ENCODE measurements at regions of chr3 and their contacts with region 1.

Region 1: GRCh38 chr3:153944084-153944483 is 177.1 kb upstream of the ARHGEF26 start:
- DNase-seq: no peak
- ATAC-seq: no peak
- H3K4me3 ChIP-seq: no peak overlapping the region
- H3K27ac ChIP-seq: no peak overlapping the region
- H3K4me1 ChIP-seq: no peaks in the 10 kb centered on the region
- H3K27me3 ChIP-seq: no peaks in the 10 kb centered on the region
- CTCF ChIP-seq: no peak

Region 2: DNA sequence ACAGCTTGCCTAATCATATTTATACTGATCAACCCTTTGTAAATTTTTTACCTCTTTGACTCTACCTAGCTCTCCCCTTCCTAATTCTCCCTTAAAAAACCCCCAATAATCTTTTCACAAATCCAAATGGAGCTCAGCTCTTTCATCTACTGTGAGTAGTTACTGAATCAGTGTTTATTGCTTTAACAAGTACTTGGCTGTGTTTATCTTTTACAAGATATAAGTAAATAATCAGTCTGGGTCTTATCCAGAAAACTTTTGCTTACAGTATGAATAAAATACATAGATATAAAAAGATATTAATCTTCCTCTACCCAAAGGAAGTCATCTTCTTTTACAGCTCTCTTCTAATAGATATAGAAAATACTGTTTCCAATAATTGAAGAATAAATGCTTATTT is 415.6 kb before region 1 on chr3:
- intact Hi-C with region 1: loop called in 1 of 2 experiments (anchors 10 kb)
- DNase-seq: no peak
- ATAC-seq: no peak
- H3K4me3 ChIP-seq: no peak overlapping the region
- H3K27ac ChIP-seq: no peak overlapping the region
- H3K4me1 ChIP-seq: no peaks in the 10 kb centered on the region
- H3K27me3 ChIP-seq: no peaks in the 10 kb centered on the region
- CTCF ChIP-seq: no peak